ENCODE measurements at regions of chr19 and their contacts with region 1.

Region 1: GRCh38 chr19:5904352-5905113 is at the start of gene VMAC:
- DNase-seq: peak in 8 of 9 donors; percentile 99 to 100 (median 100)
- ATAC-seq: peak; percentile 85
- H3K4me3 ChIP-seq: peak within 1 kb of the TSS; percentile 89
- H3K4me3 Mint-ChIP-seq: peak within 1 kb of the TSS; percentile 89 to 99 (median 96)
- H3K27ac ChIP-seq: peak within 1 kb of the TSS; percentile 93
- H3K27ac Mint-ChIP-seq: peak within 1 kb of the TSS; percentile 96 to 100 (median 100)
- H3K4me1 ChIP-seq: peaks cover 18 to 19% of the 10 kb centered on the region in 2 donors
- H3K4me1 Mint-ChIP-seq: peaks cover 21 to 53% (median 30%) of the 10 kb centered on the region in 7 donors
- H3K27me3 ChIP-seq: no peaks in the 10 kb centered on the region
- H3K27me3 Mint-ChIP-seq: no peaks in the 10 kb centered on the region
- total RNA-seq, gene VMAC: 13.1 to 39.4 (median 27.8) TPM

Region 2: GRCh38 chr19:5622463-5623396 is 281.8 kb before region 1 on chr19 and contains the starts of genes SAFB and SAFB2:
- CTCF ChIA-PET with region 1: no interaction called
- POLR2A ChIA-PET with region 1: interaction called, 10 read pairs
- intact Hi-C with region 1: loop called (anchors 1 to 5 kb)
- DNase-seq: peak; percentile 96 to 100 (median 100)
- ATAC-seq: peak; percentile 91
- H3K4me3 ChIP-seq: peak within 1 kb of the TSS; percentile 91
- H3K4me3 Mint-ChIP-seq: peak within 1 kb of the TSS; percentile 97 to 100 (median 100)
- H3K27ac ChIP-seq: peak within 1 kb of the TSS; percentile 97
- H3K27ac Mint-ChIP-seq: peak within 1 kb of the TSS; percentile 99 to 100 (median 100)
- H3K4me1 ChIP-seq: peaks cover 54 to 66% of the 10 kb centered on the region in 2 donors
- H3K4me1 Mint-ChIP-seq: peaks cover 52 to 79% (median 70%) of the 10 kb centered on the region in 7 donors
- H3K27me3 ChIP-seq: no peaks in the 10 kb centered on the region
- H3K27me3 Mint-ChIP-seq: peaks cover 0 to 5% (median 0%) of the 10 kb centered on the region in 5 donors
- total RNA-seq, gene SAFB: 141 to 203 (median 174) TPM
- total RNA-seq, gene SAFB2: 112 to 250 (median 243) TPM

Region 3: GRCh38 chr19:5790573-5791520 is 113.7 kb before region 1 on chr19 and contains the start of gene DUS3L:
- CTCF ChIA-PET with region 1: no interaction called
- POLR2A ChIA-PET with region 1: interaction called, 6 read pairs
- intact Hi-C with region 1: loop called (anchors 1 kb)
- DNase-seq: peak; percentile 90 to 97 (median 94)
- ATAC-seq: peak; percentile 97
- H3K4me3 ChIP-seq: peak within 1 kb of the TSS; percentile 95
- H3K4me3 Mint-ChIP-seq: peak within 1 kb of the TSS; percentile 94 to 100 (median 100)
- H3K27ac ChIP-seq: peak within 1 kb of the TSS; percentile 91
- H3K27ac Mint-ChIP-seq: peak within 1 kb of the TSS; percentile 99 to 100 (median 100)
- H3K4me1 ChIP-seq: peaks cover 8 to 12% of the 10 kb centered on the region in 2 donors
- H3K4me1 Mint-ChIP-seq: peaks cover 6 to 22% (median 15%) of the 10 kb centered on the region in 7 donors
- H3K27me3 ChIP-seq: no peaks in the 10 kb centered on the region
- H3K27me3 Mint-ChIP-seq: no peaks in the 10 kb centered on the region
- total RNA-seq, gene DUS3L: 53.2 to 179 (median 82.7) TPM

Region 4: DNA sequence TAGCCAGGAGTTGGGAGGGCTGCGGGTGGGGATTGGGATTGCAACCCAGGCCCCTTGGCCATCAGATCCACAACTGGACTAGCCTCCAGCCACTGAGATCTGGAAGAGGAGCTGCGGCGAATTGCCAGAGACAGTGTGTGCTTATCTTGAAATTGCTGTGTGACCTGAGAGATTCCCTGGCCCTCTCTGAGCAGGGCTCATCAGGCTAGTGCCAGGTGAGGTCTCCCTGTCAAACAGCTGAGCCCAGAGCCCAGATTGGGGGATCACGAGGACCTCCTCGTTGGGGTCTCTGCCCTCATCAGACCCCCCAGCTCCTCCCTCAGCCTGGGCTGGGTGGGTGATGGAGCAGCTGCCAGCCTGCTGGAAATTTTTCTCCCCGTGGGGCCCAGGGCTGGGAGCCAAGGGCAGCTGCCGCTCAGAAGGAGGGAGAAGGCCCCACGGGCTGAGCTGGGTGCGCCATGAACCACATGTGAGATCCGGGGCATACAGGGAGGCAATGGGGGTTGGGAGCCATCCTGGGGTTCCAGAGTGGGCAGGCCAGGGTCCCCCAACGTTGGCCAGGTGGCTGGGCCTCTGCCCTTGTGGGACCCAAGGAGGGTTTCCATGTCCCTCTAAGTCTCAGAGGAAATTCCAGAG is 41.4 kb before region 1 on chr19:
- CTCF ChIA-PET with region 1: no interaction called
- POLR2A ChIA-PET with region 1: no interaction called
- intact Hi-C with region 1: no loop called
- DNase-seq: no peak
- ATAC-seq: no peak
- H3K4me3 ChIP-seq: no peak overlapping the region
- H3K4me3 Mint-ChIP-seq: no peak overlapping the region
- H3K27ac ChIP-seq: no peak overlapping the region
- H3K27ac Mint-ChIP-seq: no peak overlapping the region
- H3K4me1 ChIP-seq: no peaks in the 10 kb centered on the region
- H3K4me1 Mint-ChIP-seq: peaks cover 0 to 7% (median 0%) of the 10 kb centered on the region in 7 donors
- H3K27me3 ChIP-seq: no peaks in the 10 kb centered on the region
- H3K27me3 Mint-ChIP-seq: peaks cover 0 to 6% (median 0%) of the 10 kb centered on the region in 5 donors

Region 5: DNA sequence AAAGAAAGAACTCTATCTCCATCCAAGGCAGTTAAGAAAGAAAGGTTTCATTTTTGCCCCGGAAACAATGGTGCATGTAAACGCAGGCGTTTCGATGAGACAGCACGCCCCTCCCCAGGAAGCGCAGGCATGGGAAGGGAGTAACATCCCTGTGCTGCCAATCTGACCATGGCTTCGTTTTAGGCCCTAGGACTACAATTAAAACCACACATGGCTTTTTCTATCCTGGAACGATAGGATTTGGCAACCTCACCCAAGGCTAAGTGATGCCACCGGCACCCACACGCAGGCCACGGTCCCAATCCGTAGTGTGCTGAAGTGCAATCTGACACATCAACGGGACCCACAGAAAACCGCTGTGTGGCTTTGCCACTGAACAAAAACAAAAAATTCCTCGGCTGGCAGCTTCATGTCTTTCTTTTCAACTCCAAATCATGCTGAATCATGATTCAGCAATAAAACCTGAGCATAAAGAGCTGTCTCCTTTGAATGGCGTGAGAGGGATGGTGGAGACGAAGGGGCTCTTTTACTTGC is 49.2 kb after region 1 on chr19:
- CTCF ChIA-PET with region 1: interaction called, 5 read pairs
- POLR2A ChIA-PET with region 1: interaction called, 19 read pairs
- intact Hi-C with region 1: loop called (anchors 2 kb)
- DNase-seq: peak in 8 of 9 donors; percentile 16 to 37 (median 32)
- ATAC-seq: peak; percentile 45
- H3K4me3 ChIP-seq: peak overlapping the region; percentile 17
- H3K4me3 Mint-ChIP-seq: peak overlapping the region; percentile 47 to 81 (median 74)
- H3K27ac ChIP-seq: peak overlapping the region; percentile 55
- H3K27ac Mint-ChIP-seq: peak overlapping the region; percentile 45 to 97 (median 89)
- H3K4me1 ChIP-seq: peaks cover 30 to 73% of the 10 kb centered on the region in 2 donors
- H3K4me1 Mint-ChIP-seq: peaks cover 67 to 99% (median 92%) of the 10 kb centered on the region in 7 donors
- H3K27me3 ChIP-seq: no peaks in the 10 kb centered on the region
- H3K27me3 Mint-ChIP-seq: no peaks in the 10 kb centered on the region

Region 6: GRCh38 chr19:6056801-6057650 is 152.5 kb after region 1 on chr19:
- CTCF ChIA-PET with region 1: no interaction called
- POLR2A ChIA-PET with region 1: no interaction called
- intact Hi-C with region 1: no loop called
- DNase-seq: no peak
- ATAC-seq: peak; percentile 80
- H3K4me3 ChIP-seq: no peak overlapping the region
- H3K4me3 Mint-ChIP-seq: no peak overlapping the region
- H3K27ac ChIP-seq: no peak overlapping the region
- H3K27ac Mint-ChIP-seq: peak overlapping the region in 1 of 9 donors; percentile 57
- H3K4me1 ChIP-seq: peaks cover 0 to under 1% of the 10 kb centered on the region in 2 donors
- H3K4me1 Mint-ChIP-seq: peaks cover 15 to 33% (median 19%) of the 10 kb centered on the region in 7 donors
- H3K27me3 ChIP-seq: no peaks in the 10 kb centered on the region
- H3K27me3 Mint-ChIP-seq: peaks cover 0 to 11% (median 0%) of the 10 kb centered on the region in 5 donors

Region 7: DNA sequence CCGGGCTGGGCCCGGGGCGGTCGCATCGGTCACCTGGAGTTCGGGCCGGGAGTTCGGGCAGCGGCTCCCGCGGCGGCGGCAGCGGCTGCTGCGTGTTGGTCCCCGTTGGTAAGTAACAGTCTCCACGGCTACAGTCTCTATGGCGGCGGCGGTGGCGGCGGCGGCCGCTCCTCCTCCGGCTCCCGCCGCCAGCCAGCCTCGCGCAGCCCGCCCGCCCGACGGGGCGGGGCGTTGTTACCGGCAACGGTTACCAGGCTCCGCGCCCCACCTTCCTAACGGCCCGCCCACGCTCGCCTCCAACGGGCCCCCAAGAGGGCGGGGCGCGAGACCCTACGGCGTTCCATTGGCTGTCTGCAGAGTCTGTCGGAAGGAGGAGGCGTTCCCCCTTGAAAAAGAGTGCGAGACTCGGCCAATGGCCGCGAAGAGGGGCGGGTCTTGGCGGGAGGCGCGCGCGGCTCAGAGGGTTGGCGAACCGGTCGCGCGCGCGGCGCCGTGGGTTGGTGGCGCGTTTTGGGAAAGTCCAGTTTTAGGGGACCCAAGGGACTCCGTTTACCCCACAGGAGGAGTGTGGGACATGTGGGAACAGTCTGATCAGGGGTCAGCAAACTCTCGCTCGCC is 205.9 kb after region 1 on chr19 and contains the start of gene RFX2:
- CTCF ChIA-PET with region 1: no interaction called
- POLR2A ChIA-PET with region 1: no interaction called
- intact Hi-C with region 1: loop called in 1 of 2 experiments (anchors 1 kb)
- DNase-seq: peak; percentile 97 to 100 (median 99)
- ATAC-seq: peak; percentile 99
- H3K4me3 ChIP-seq: peak within 1 kb of the TSS; percentile 60
- H3K4me3 Mint-ChIP-seq: peak within 1 kb of the TSS; percentile 84 to 98 (median 92)
- H3K27ac ChIP-seq: peak within 1 kb of the TSS; percentile 64
- H3K27ac Mint-ChIP-seq: peak within 1 kb of the TSS; percentile 71 to 92 (median 88)
- H3K4me1 ChIP-seq: peaks cover 8 to 10% of the 10 kb centered on the region in 2 donors
- H3K4me1 Mint-ChIP-seq: peaks cover 21 to 27% (median 25%) of the 10 kb centered on the region in 7 donors
- H3K27me3 ChIP-seq: peaks cover 0 to 4% of the 10 kb centered on the region in 2 donors
- H3K27me3 Mint-ChIP-seq: peaks cover 0 to 19% (median 4%) of the 10 kb centered on the region in 5 donors
- total RNA-seq, gene RFX2: 4.0 to 18.4 (median 8.4) TPM

Region 8: GRCh38 chr19:6458695-6459457 is 554.3 kb after region 1 on chr19:
- CTCF ChIA-PET with region 1: no interaction called
- POLR2A ChIA-PET with region 1: no interaction called
- intact Hi-C with region 1: no loop called
- DNase-seq: no peak
- ATAC-seq: no peak
- H3K4me3 ChIP-seq: peak overlapping the region; percentile 72
- H3K4me3 Mint-ChIP-seq: peak overlapping the region; percentile 64 to 98 (median 89)
- H3K27ac ChIP-seq: peak overlapping the region; percentile 83
- H3K27ac Mint-ChIP-seq: peak overlapping the region; percentile 52 to 93 (median 83)
- H3K4me1 ChIP-seq: peaks cover 0 to 2% of the 10 kb centered on the region in 2 donors
- H3K4me1 Mint-ChIP-seq: peaks cover 8 to 31% (median 25%) of the 10 kb centered on the region in 7 donors
- H3K27me3 ChIP-seq: no peaks in the 10 kb centered on the region
- H3K27me3 Mint-ChIP-seq: peaks cover 0 to 2% (median 0%) of the 10 kb centered on the region in 5 donors

Region 9: GRCh38 chr19:7197760-7198696 is 1293.5 kb after region 1 on chr19:
- CTCF ChIA-PET with region 1: no interaction called
- POLR2A ChIA-PET with region 1: no interaction called
- intact Hi-C with region 1: loop called in 1 of 2 experiments (anchors 2 kb)
- DNase-seq: peak; percentile 91 to 95 (median 94)
- ATAC-seq: peak; percentile 92
- H3K4me3 ChIP-seq: peak overlapping the region; percentile 75
- H3K4me3 Mint-ChIP-seq: peak overlapping the region; percentile 88 to 99 (median 94)
- H3K27ac ChIP-seq: peak overlapping the region; percentile 71
- H3K27ac Mint-ChIP-seq: peak overlapping the region; percentile 95 to 100 (median 97)
- H3K4me1 ChIP-seq: peaks cover 12 to 15% of the 10 kb centered on the region in 2 donors
- H3K4me1 Mint-ChIP-seq: peaks cover 0 to 20% (median 14%) of the 10 kb centered on the region in 7 donors
- H3K27me3 ChIP-seq: no peaks in the 10 kb centered on the region
- H3K27me3 Mint-ChIP-seq: peaks cover 0 to 47% (median 0%) of the 10 kb centered on the region in 5 donors

Measured in naive thymus-derived CD4-positive, alpha-beta T cell (primary cell).